Activated CD4-positive, alpha-beta memory T cell treated with anti-CD3 and anti-CD28 coated beads for 36 hours (primary cell): ENCODE measurements at regions of chr9 and their contacts with region 1.

Region 1: DNA sequence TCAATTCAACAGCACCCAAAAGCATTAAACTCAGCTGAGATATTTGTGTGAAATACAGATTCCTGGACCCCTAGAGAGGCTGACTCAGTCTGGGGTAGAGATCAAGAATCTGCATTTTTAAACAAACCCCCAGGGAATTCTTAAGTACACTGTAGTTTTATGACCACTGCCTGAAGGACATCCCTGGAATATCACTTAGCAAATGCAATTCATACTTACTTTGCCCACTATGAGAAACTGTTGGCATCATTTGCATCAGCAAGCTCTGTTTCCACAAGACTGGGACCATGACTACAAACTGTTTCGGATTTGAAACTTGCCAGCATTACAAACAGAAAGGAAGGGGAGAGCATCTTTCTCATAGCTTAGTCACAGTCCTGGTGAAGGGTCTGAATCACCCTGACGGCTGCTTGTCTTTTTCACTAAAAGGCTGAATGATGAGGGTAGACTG is 63.7 kb downstream of the MLLT3 start:
- DNase-seq: peak; percentile 60
- H3K4me3 Mint-ChIP-seq: no peak overlapping the region
- H3K27ac Mint-ChIP-seq: peak overlapping the region; percentile 65
- H3K4me1 Mint-ChIP-seq: peaks cover 86% of the 10 kb centered on the region
- H3K27me3 Mint-ChIP-seq: no peaks in the 10 kb centered on the region

Region 2: DNA sequence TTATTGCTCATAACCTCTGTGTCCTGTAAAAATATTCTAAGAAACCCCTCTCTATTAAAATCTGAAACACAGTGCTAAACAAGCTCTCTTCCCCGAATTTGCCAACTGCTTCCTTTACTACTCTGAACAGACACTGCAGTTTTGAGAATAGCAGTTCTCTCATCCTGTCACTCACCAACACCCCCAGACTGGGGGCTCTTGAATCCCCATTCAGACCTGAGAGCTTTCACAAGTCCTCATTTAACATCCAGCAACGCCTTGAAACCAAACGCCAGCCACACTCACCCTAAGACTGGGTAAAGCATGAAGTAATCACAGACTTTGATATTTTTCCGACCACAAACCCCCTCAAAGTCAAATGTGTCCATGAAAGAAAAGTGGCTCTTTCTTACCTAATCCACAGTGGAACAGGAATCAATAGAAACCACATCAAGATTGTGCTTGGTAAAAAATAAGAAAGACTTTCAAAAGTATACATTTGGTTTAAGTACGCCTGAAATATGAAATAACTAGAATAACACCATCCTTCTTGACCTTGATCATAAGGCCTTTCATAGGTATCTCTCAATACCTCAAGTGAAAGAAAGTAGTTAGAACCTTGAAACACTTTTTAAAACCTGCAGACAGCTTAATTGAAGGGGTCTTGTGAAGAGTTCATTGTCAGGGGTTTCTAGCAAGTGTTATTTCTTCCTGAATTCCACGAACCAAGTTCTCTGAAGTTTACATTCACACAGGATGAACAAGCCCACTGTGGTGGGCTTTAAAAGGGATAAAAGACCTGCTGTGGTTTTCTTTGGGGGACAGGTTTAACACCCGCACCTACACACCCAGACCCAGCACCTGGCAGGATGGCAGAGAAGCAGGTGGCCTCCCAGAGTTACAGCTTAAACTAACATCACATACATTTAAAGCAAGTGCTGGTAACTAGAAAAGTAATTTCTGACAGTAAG is 348.9 kb before region 1 on chr9:
- CTCF ChIA-PET with region 1: interaction called, 3 read pairs
- POLR2A ChIA-PET with region 1: no interaction called
- intact Hi-C with region 1: loop called (anchors 1 kb)
- DNase-seq: peak; percentile 79
- H3K4me3 Mint-ChIP-seq: no peak overlapping the region
- H3K27ac Mint-ChIP-seq: peak overlapping the region; percentile 89
- H3K4me1 Mint-ChIP-seq: peaks cover 33% of the 10 kb centered on the region
- H3K27me3 Mint-ChIP-seq: no peaks in the 10 kb centered on the region

Region 3: DNA sequence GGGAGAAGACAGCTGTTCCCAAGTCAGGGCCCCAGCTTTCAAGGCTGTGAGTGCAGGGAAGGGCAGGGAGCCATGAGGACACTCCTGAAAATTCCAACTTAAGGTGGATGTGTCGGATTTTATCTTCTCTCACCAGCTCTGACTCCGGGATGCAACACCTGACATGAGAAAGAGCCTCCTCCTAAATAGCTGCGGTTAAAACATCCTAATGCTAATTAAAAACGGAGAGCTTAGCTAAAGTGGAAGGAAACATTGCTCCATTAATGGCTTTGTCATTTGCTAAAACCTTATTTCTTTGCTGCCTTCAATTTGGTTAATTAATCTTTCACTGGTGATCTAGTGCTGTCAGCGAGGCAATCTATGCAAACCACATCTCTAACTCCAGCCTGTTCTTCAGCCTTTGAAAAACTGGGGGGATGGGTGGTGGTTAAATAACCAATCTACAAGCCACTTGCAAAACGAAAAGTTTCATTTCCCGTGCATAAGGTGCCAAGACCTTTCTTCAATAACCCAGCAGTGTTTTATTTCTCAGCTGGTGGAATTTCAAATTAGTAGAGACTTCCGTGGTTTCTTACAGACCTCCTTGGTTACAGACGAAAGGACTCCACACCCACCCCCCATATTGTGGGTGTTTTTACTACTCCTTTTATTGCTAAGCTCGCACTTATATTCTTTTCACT is 315.9 kb before region 1 on chr9:
- CTCF ChIA-PET with region 1: no interaction called
- POLR2A ChIA-PET with region 1: no interaction called
- intact Hi-C with region 1: no loop called
- DNase-seq: peak; percentile 30
- H3K4me3 Mint-ChIP-seq: peak overlapping the region; percentile 18
- H3K27ac Mint-ChIP-seq: no peak overlapping the region
- H3K4me1 Mint-ChIP-seq: peaks cover 46% of the 10 kb centered on the region
- H3K27me3 Mint-ChIP-seq: peaks cover 7% of the 10 kb centered on the region

Region 4: DNA sequence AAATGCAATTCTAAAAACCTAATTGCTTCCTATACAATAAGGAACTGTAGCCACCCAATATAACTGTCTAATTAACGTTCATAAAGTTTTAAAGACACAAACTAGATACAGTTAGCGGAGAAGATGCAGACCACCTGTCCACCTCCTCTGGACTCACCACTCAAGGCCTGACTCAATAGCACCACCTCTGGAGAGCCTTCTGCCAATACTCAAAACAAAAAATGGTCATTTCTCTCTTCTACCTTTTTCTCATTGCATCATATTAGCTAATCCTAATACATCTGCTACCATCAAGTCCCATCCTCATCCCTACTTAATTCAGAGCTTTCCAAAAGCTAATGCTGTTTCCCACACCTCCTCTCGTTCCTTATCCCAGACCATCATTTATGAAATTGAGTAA is 96.2 kb before region 1 on chr9:
- CTCF ChIA-PET with region 1: no interaction called
- POLR2A ChIA-PET with region 1: no interaction called
- intact Hi-C with region 1: no loop called
- DNase-seq: no peak
- H3K4me3 Mint-ChIP-seq: no peak overlapping the region
- H3K27ac Mint-ChIP-seq: no peak overlapping the region
- H3K4me1 Mint-ChIP-seq: peaks cover 39% of the 10 kb centered on the region
- H3K27me3 Mint-ChIP-seq: no peaks in the 10 kb centered on the region

Region 5: GRCh38 chr9:20538956-20539355 is 19.6 kb before region 1 on chr9:
- CTCF ChIA-PET with region 1: no interaction called
- POLR2A ChIA-PET with region 1: interaction called, 4 read pairs
- intact Hi-C with region 1: loop called (anchors 2 kb)
- DNase-seq: no peak
- H3K4me3 Mint-ChIP-seq: no peak overlapping the region
- H3K27ac Mint-ChIP-seq: no peak overlapping the region
- H3K4me1 Mint-ChIP-seq: peaks cover 38% of the 10 kb centered on the region
- H3K27me3 Mint-ChIP-seq: no peaks in the 10 kb centered on the region

Region 6: GRCh38 chr9:20582150-20582549 is 23.6 kb after region 1 on chr9:
- CTCF ChIA-PET with region 1: no interaction called
- POLR2A ChIA-PET with region 1: interaction called, 5 read pairs
- intact Hi-C with region 1: loop called (anchors 2 kb)
- DNase-seq: no peak
- H3K4me3 Mint-ChIP-seq: no peak overlapping the region
- H3K27ac Mint-ChIP-seq: no peak overlapping the region
- H3K4me1 Mint-ChIP-seq: peaks cover 64% of the 10 kb centered on the region
- H3K27me3 Mint-ChIP-seq: no peaks in the 10 kb centered on the region

Region 7: DNA sequence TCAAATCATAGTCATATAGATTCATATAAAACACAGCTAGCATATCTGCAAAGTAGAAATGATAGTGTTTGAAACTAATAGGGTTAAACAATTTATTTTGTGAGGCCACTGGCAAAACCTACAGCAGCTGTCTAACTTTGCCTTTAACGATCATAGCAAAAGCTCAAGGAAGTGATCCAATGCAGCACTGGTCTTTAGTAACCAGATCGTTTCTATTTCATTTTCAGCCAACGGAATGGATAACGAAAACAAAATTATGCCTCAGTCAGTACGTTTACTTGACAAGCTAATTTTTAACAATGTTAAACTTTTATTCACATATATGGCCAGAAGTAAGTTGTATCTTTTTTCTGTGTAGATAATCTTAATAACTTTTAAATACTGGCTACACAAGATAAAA is 46.0 kb after region 1 on chr9:
- CTCF ChIA-PET with region 1: interaction called, 4 read pairs
- POLR2A ChIA-PET with region 1: no interaction called
- intact Hi-C with region 1: loop called (anchors 5 kb)
- DNase-seq: no peak
- H3K4me3 Mint-ChIP-seq: peak overlapping the region; percentile 34
- H3K27ac Mint-ChIP-seq: peak overlapping the region; percentile 49
- H3K4me1 Mint-ChIP-seq: peaks cover 72% of the 10 kb centered on the region
- H3K27me3 Mint-ChIP-seq: no peaks in the 10 kb centered on the region

Region 8: DNA sequence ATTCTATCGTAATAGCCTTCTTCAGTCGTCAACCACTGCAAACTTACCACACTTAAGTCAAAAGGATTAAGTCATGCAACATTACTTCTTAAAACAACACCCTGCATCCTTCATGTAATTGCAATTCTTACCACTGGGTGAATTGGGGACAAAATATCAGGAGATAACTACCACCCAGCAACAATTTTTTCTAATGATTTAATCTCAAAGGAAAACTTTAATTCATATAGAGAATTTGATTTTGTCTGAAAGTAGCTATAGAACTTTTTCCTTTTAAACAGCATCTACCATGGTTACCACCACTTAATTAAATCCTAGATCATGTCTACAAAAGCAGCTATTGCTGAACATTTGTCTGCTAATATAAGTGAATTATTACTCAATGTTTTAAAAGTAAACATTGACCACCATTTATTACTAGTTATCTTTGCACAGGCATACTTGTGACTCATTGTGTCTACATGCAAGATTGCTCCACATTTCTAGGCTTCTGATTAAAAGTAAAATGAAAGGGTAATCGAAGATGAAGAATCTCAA is 53.2 kb after region 1 on chr9:
- CTCF ChIA-PET with region 1: interaction called, 3 read pairs
- POLR2A ChIA-PET with region 1: no interaction called
- intact Hi-C with region 1: loop called (anchors 2 kb)
- DNase-seq: no peak
- H3K4me3 Mint-ChIP-seq: no peak overlapping the region
- H3K27ac Mint-ChIP-seq: no peak overlapping the region
- H3K4me1 Mint-ChIP-seq: peaks cover 67% of the 10 kb centered on the region
- H3K27me3 Mint-ChIP-seq: no peaks in the 10 kb centered on the region

Region 9: GRCh38 chr9:21334701-21335632 is 776.4 kb after region 1 on chr9 and contains the start of gene KLHL9:
- CTCF ChIA-PET with region 1: no interaction called
- POLR2A ChIA-PET with region 1: no interaction called
- intact Hi-C with region 1: loop called (anchors 10 kb)
- DNase-seq: peak; percentile 92
- H3K4me3 Mint-ChIP-seq: peak within 1 kb of the TSS; percentile 86
- H3K27ac Mint-ChIP-seq: peak within 1 kb of the TSS; percentile 87
- H3K4me1 Mint-ChIP-seq: peaks cover 50% of the 10 kb centered on the region
- H3K27me3 Mint-ChIP-seq: no peaks in the 10 kb centered on the region
- total RNA-seq, gene KLHL9: 15.9 to 16.0 TPM